Activated CD4-positive, alpha-beta memory T cell treated with anti-CD3 and anti-CD28 coated beads for 36 hours (primary cell): ENCODE measurements at regions of chr1 and their contacts with region 1.

Region 1: DNA sequence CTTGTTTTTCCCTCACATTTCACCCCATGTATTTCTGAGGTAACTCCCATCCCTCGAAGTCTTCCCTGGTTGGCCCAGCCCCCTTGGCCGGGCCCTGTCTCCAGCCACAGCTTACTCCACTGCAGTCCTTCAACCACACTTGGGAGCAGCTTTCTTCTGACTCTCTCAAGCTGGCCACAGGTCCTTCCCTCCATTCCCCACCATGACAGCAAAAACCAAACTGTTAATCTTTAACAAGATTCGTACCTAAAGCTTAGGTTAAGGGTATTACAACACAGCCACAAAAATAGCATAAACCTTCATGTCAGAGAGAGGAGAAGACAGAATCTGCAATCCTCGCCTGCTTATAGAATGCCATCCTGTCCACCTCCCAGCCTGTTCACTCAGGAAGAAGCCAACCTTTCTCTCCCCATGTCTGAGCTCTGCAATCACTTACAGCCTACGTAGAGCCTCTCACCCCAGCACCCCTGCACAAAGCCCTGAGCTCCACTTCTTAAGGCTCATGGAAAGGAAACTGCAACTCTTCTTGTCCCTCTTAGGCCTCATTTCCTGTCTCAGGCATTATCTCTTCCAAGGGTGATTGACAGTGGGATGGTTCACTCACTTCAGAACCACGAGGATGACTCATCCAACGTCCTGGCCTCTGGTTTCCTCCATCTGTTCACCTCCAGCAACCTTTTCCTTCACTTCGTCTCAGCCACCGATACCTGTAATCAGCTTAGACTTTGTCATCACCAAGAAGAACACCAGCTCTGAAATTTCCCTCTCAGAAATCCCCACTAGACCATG is 72.8 kb downstream of the CD2 start:
- DNase-seq: peak; percentile 90
- H3K4me3 Mint-ChIP-seq: peak overlapping the region; percentile 79
- H3K27ac Mint-ChIP-seq: peak overlapping the region; percentile 91
- H3K4me1 Mint-ChIP-seq: peaks cover 77% of the 10 kb centered on the region
- H3K27me3 Mint-ChIP-seq: no peaks in the 10 kb centered on the region

Region 2: GRCh38 chr1:116504308-116505156 is 322.5 kb before region 1 on chr1:
- CTCF ChIA-PET with region 1: no interaction called
- POLR2A ChIA-PET with region 1: no interaction called
- intact Hi-C with region 1: loop called (anchors 1 kb)
- DNase-seq: peak; percentile 92
- H3K4me3 Mint-ChIP-seq: peak overlapping the region; percentile 38
- H3K27ac Mint-ChIP-seq: peak overlapping the region; percentile 97
- H3K4me1 Mint-ChIP-seq: peaks cover 65% of the 10 kb centered on the region
- H3K27me3 Mint-ChIP-seq: no peaks in the 10 kb centered on the region

Region 3: GRCh38 chr1:116570358-116571200 is 256.4 kb before region 1 on chr1 and contains the start of gene CD58:
- CTCF ChIA-PET with region 1: interaction called, 4 read pairs
- POLR2A ChIA-PET with region 1: no interaction called
- intact Hi-C with region 1: loop called (anchors 5 kb)
- DNase-seq: peak; percentile 92
- H3K4me3 Mint-ChIP-seq: peak within 1 kb of the TSS; percentile 99
- H3K27ac Mint-ChIP-seq: peak within 1 kb of the TSS; percentile 93
- H3K4me1 Mint-ChIP-seq: peaks cover 72% of the 10 kb centered on the region
- H3K27me3 Mint-ChIP-seq: no peaks in the 10 kb centered on the region
- total RNA-seq, gene CD58: 21.9 to 27.2 TPM

Region 4: DNA sequence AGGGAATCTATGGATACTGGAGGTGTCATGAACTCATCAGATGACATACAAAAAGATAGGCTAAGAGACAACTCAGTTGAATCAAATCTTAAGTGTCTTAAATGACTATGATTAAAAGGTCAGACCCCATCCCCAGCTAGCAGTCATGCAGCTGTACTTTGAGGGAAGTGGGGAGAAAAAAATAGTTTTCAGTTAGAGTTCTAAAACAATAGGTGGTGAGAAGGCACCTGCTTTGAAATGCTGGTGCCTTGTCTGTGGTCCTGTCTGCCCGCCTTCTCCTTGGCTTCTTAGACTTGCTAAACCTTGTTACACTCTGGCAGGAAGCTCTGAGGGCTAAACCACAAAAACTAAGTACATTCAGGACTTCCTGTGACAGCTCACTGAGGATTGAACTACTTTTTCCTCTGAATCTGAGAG is 57.4 kb before region 1 on chr1:
- CTCF ChIA-PET with region 1: interaction called, 32 read pairs
- POLR2A ChIA-PET with region 1: interaction called, 88 read pairs
- intact Hi-C with region 1: loop called (anchors 1 kb)
- DNase-seq: peak; percentile 85
- H3K4me3 Mint-ChIP-seq: peak overlapping the region; percentile 99
- H3K27ac Mint-ChIP-seq: peak overlapping the region; percentile 99
- H3K4me1 Mint-ChIP-seq: peaks cover 95% of the 10 kb centered on the region
- H3K27me3 Mint-ChIP-seq: peaks cover 2% of the 10 kb centered on the region

Region 5: GRCh38 chr1:116847688-116848531 is 20.9 kb after region 1 on chr1:
- CTCF ChIA-PET with region 1: no interaction called
- POLR2A ChIA-PET with region 1: no interaction called
- intact Hi-C with region 1: loop called (anchors 1 kb)
- DNase-seq: peak; percentile 61
- H3K4me3 Mint-ChIP-seq: no peak overlapping the region
- H3K27ac Mint-ChIP-seq: peak overlapping the region; percentile 34
- H3K4me1 Mint-ChIP-seq: peaks cover 27% of the 10 kb centered on the region
- H3K27me3 Mint-ChIP-seq: no peaks in the 10 kb centered on the region

Region 6: GRCh38 chr1:116943438-116943837 is 116.4 kb after region 1 on chr1:
- CTCF ChIA-PET with region 1: no interaction called
- POLR2A ChIA-PET with region 1: no interaction called
- intact Hi-C with region 1: no loop called
- DNase-seq: peak; percentile 25
- H3K4me3 Mint-ChIP-seq: no peak overlapping the region
- H3K27ac Mint-ChIP-seq: no peak overlapping the region
- H3K4me1 Mint-ChIP-seq: peaks cover 22% of the 10 kb centered on the region
- H3K27me3 Mint-ChIP-seq: no peaks in the 10 kb centered on the region

Region 7: GRCh38 chr1:117001254-117001927 is 174.4 kb after region 1 on chr1 and contains the start of gene CD101:
- CTCF ChIA-PET with region 1: interaction called, 5 read pairs
- POLR2A ChIA-PET with region 1: interaction called, 4 read pairs
- intact Hi-C with region 1: loop called (anchors 1 kb)
- DNase-seq: peak; percentile 66
- H3K4me3 Mint-ChIP-seq: no peak within 1 kb of the TSS
- H3K27ac Mint-ChIP-seq: peak within 1 kb of the TSS; percentile 26
- H3K4me1 Mint-ChIP-seq: peaks cover 31% of the 10 kb centered on the region
- H3K27me3 Mint-ChIP-seq: no peaks in the 10 kb centered on the region
- total RNA-seq, gene CD101: 0.14 to 0.19 TPM